CD4-positive, alpha-beta memory T cell (primary cell): ENCODE measurements at regions of chr13 and their contacts with region 1.

Region 1: GRCh38 chr13:49606747-49607648 is 21.3 kb upstream of the ARL11 start:
- DNase-seq: peak; percentile 72 to 78 (median 77)
- H3K4me3 ChIP-seq: peak overlapping the region in 1 of 2 donors; percentile 13
- H3K4me3 Mint-ChIP-seq: peak overlapping the region; percentile 82 to 95 (median 89)
- H3K27ac ChIP-seq: no peak overlapping the region
- H3K27ac Mint-ChIP-seq: peak overlapping the region in 6 of 7 donors; percentile 22 to 95 (median 72)
- H3K4me1 ChIP-seq: no peaks in the 10 kb centered on the region
- H3K4me1 Mint-ChIP-seq: peaks cover 2 to 5% (median 3%) of the 10 kb centered on the region in 4 donors
- H3K27me3 ChIP-seq: no peaks in the 10 kb centered on the region
- H3K27me3 Mint-ChIP-seq: no peaks in the 10 kb centered on the region

Region 2: GRCh38 chr13:49240017-49240416 is 367.0 kb before region 1 on chr13:
- CTCF ChIA-PET with region 1: interaction called, 6 read pairs
- POLR2A ChIA-PET with region 1: no interaction called
- intact Hi-C with region 1: loop called (anchors 1 kb)
- DNase-seq: peak in 4 of 5 donors; percentile 39 to 50 (median 40)
- H3K4me3 ChIP-seq: no peak overlapping the region
- H3K4me3 Mint-ChIP-seq: no peak overlapping the region
- H3K27ac ChIP-seq: no peak overlapping the region
- H3K27ac Mint-ChIP-seq: no peak overlapping the region
- H3K4me1 ChIP-seq: no peaks in the 10 kb centered on the region
- H3K4me1 Mint-ChIP-seq: peaks cover 0 to 3% (median 1%) of the 10 kb centered on the region in 4 donors
- H3K27me3 ChIP-seq: no peaks in the 10 kb centered on the region
- H3K27me3 Mint-ChIP-seq: peaks cover 0 to 6% of the 10 kb centered on the region in 2 donors

Region 3: GRCh38 chr13:49307365-49307764 is 299.6 kb before region 1 on chr13:
- CTCF ChIA-PET with region 1: interaction called, 81 read pairs
- POLR2A ChIA-PET with region 1: no interaction called
- intact Hi-C with region 1: no loop called
- DNase-seq: no peak
- H3K4me3 ChIP-seq: no peak overlapping the region
- H3K4me3 Mint-ChIP-seq: no peak overlapping the region
- H3K27ac ChIP-seq: no peak overlapping the region
- H3K27ac Mint-ChIP-seq: peak overlapping the region in 1 of 7 donors; percentile 17
- H3K4me1 ChIP-seq: no peaks in the 10 kb centered on the region
- H3K4me1 Mint-ChIP-seq: peaks cover 2 to 6% (median 4%) of the 10 kb centered on the region in 4 donors
- H3K27me3 ChIP-seq: no peaks in the 10 kb centered on the region
- H3K27me3 Mint-ChIP-seq: no peaks in the 10 kb centered on the region

Region 4: DNA sequence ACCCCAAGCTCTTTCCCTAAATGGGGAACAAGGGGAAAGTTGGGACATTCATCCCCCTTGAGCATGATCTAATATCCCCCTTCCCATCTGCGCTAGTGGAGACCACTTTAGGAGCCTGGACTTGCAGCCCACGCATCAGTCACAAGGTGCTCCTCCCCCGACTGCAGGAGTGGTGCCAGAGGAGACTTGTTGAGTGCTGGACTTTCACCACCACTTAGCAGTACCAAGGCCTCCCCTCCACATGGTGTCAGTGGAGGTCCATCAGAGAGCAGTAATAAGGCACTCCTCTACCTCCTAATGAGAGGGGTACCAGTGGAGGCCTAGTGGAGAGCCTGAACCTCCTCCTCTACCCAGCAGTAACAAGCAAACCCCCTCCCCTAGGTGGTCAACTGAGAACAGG is 185.6 kb before region 1 on chr13:
- CTCF ChIA-PET with region 1: interaction called, 9 read pairs
- POLR2A ChIA-PET with region 1: no interaction called
- intact Hi-C with region 1: loop called (anchors 1 kb)
- DNase-seq: peak in 4 of 5 donors; percentile 5 to 19 (median 13)
- H3K4me3 ChIP-seq: no peak overlapping the region
- H3K4me3 Mint-ChIP-seq: no peak overlapping the region
- H3K27ac ChIP-seq: no peak overlapping the region
- H3K27ac Mint-ChIP-seq: no peak overlapping the region
- H3K4me1 ChIP-seq: no peaks in the 10 kb centered on the region
- H3K4me1 Mint-ChIP-seq: no peaks in the 10 kb centered on the region
- H3K27me3 ChIP-seq: no peaks in the 10 kb centered on the region
- H3K27me3 Mint-ChIP-seq: peaks cover 0 to 2% of the 10 kb centered on the region in 2 donors

Region 5: DNA sequence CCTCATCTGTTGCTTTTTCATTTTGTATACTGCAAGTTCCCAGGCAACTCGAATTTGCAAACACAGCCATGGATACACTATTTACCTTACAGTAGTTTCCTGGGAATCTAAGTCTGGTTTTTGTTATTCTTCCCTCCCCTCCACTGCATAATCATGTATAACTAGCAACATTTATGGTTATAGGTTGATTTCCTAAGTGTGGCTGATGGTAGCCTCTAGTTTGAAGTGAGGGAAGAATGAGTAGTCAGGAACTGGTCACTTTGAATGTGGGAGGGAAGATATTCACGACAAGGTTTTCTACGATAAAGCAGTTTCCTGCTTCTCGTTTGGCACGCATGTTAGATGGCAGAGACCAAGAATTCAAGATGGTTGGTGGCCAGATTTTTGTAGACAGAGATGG is 408.3 kb after region 1 on chr13 and contains the start of gene KCNRG:
- CTCF ChIA-PET with region 1: no interaction called
- POLR2A ChIA-PET with region 1: no interaction called
- intact Hi-C with region 1: no loop called
- DNase-seq: no peak
- H3K4me3 ChIP-seq: no peak within 1 kb of the TSS
- H3K4me3 Mint-ChIP-seq: no peak within 1 kb of the TSS
- H3K27ac ChIP-seq: no peak within 1 kb of the TSS
- H3K27ac Mint-ChIP-seq: peak within 1 kb of the TSS in 6 of 7 donors; percentile 5 to 80 (median 48)
- H3K4me1 ChIP-seq: peaks cover 12% of the 10 kb centered on the region
- H3K4me1 Mint-ChIP-seq: peaks cover 33 to 52% (median 45%) of the 10 kb centered on the region in 4 donors
- H3K27me3 ChIP-seq: no peaks in the 10 kb centered on the region
- H3K27me3 Mint-ChIP-seq: no peaks in the 10 kb centered on the region
- total RNA-seq, gene KCNRG: 0.64 to 0.83 TPM